ENCODE measurements at regions of chr10 and their contacts with region 1.

Region 1: GRCh38 chr10:84008878-84009277 is 130.4 kb upstream of the GHITM start:
- DNase-seq: peak in 1 of 2 donors; percentile 27
- H3K4me3 ChIP-seq: no peak overlapping the region
- H3K27ac ChIP-seq: no peak overlapping the region
- H3K4me1 ChIP-seq: no peaks in the 10 kb centered on the region
- H3K27me3 ChIP-seq: no peaks in the 10 kb centered on the region
- CTCF ChIP-seq: peak in 1 of 3 experiments; percentile 19
- POLR2A ChIP-seq: no peak

Region 2: DNA sequence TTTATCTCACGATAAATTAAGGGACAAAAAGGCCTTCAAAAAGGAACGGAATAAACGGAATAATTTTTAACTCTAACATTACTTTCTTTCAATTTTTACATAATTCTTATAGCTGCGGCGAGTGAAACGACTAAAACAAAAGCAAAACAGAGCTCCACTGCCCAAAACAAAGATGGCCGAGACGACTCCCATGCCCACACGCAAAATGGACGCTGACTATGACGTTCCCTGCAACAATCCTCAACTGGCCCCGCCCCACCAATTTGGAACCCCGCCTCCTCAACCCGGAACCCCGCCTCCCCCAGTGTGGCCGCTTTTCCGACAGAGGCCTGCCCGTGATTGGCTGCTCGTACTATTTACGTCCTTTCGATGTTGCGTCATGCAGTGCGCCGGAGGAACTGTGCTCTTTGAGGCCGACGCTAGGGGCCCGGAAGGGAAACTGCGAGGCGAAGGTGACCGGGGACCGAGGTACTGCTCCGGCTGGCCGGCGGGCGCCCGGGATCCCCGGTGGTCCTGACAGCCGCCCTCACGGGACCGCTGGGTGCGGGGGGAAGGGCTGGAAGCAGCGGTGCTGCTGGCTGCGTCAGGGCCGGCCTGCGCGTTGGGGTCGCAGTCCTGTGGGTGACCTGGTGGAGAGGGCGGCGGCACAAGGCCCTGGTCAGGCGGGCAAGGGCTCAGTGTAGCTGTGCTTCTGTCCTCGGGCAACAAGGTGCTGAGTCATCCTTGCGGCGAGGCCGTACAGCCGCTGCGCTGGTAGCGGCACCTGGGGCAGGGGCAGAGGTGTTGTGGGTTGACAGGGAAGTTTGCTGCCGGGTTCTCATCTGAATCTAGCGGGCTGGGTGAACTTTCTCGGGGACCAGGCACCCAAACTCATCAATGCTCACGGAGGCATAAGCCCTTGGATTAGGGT is 130.5 kb after region 1 on chr10 and contains the start of gene GHITM:
- intact Hi-C with region 1: no loop called
- DNase-seq: peak; percentile 97 to 99
- H3K4me3 ChIP-seq: peak within 1 kb of the TSS; percentile 87 to 95
- H3K27ac ChIP-seq: peak within 1 kb of the TSS; percentile 98
- H3K4me1 ChIP-seq: peaks cover 22% of the 10 kb centered on the region
- H3K27me3 ChIP-seq: no peaks in the 10 kb centered on the region
- CTCF ChIP-seq: peak in 1 of 3 experiments; percentile 47
- POLR2A ChIP-seq: peak in 1 of 2 donors; percentile 80
- total RNA-seq, gene GHITM: 87.9 TPM

Region 3: GRCh38 chr10:84739641-84740040 is 730.8 kb after region 1 on chr10:
- intact Hi-C with region 1: loop called (anchors 10 kb)
- DNase-seq: no peak
- H3K4me3 ChIP-seq: no peak overlapping the region
- H3K27ac ChIP-seq: no peak overlapping the region
- H3K4me1 ChIP-seq: no peaks in the 10 kb centered on the region
- H3K27me3 ChIP-seq: no peaks in the 10 kb centered on the region
- CTCF ChIP-seq: no peak
- POLR2A ChIP-seq: no peak

Measured in vagina (tissue), 2 donors.